CD14-positive monocyte (primary cell): ENCODE measurements at regions of chr5 and their contacts with region 1.

Region 1: DNA sequence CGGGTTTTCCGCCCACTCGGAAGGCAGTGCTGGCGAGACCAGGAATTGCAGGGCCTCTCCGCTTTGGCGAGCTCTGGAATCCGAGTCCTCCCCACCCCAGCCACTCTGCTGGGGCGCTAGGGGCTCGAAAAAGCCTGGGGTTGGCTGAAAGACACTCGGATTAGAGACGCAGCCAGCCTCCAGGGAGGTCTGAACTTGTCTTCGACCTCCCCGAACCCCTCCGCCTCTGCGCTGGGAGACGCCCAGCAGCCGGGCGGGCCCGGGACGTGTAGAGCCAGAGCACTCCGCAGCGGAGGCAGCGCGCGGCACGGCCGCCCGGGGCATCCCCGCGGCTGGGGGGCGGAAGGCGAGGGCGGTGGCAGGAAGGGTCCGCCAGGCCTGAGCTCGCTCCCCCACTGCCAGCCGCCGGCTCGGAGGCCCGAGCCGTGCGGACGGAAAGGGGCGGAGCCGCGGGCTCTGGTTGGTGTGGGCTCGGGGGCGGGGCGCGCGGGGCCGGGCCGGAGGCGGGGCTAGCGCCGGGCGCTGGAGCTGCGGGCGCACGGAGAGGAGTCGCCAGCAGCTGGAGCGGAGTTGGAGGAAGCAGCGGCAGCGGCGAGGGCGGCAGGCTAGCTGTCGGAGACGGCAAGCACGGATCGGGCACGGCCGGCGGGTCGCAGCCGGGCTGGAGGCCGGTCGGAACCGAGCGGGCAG is at the start of gene PIK3R1:
- DNase-seq: peak; percentile 92 to 93 (median 92)
- H3K4me3 ChIP-seq: peak within 1 kb of the TSS; percentile 87 to 90 (median 89)
- H3K4me3 Mint-ChIP-seq: peak within 1 kb of the TSS; percentile 88 to 94
- H3K27ac ChIP-seq: peak within 1 kb of the TSS; percentile 95 to 96
- H3K27ac Mint-ChIP-seq: peak within 1 kb of the TSS; percentile 89 to 97 (median 96)
- H3K4me1 ChIP-seq: peaks cover 24 to 32% of the 10 kb centered on the region in 2 donors
- H3K4me1 Mint-ChIP-seq: peaks cover 34% of the 10 kb centered on the region
- H3K27me3 ChIP-seq: no peaks in the 10 kb centered on the region
- H3K27me3 Mint-ChIP-seq: peaks cover 0 to 3% (median 0%) of the 10 kb centered on the region in 3 donors
- CTCF ChIP-seq: peak; percentile 23
- polyA plus RNA-seq, gene PIK3R1: 9.5 to 25.5 (median 10.5) TPM

Region 2: DNA sequence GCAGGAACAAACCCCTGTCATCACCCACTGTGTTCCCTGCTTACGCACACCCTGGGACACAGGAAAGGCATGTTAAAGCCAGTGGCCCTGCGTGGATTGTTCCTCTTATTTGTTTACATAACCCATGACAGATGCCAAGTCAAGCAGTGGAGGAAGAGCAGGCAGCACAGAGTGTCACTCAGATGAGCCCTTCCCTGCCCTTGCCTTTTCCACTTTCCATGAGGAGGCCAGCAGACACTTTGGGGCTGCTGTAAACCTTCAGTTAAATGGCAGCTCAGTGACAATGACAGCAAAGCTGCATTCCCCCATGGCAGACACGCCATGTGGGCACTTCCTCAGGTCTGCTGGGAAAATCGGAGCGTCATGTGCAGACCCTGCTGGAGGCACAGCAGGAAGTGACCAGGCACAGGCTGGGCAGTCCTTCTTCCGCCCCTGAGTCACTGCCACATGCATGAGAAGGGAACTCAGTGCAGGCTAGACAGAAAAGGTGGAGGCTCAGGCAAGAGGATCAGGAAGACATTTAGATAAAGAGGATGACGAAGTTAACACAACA is 216.6 kb before region 1 on chr5:
- intact Hi-C with region 1: loop called in 1 of 2 experiments (anchors 10 kb)
- DNase-seq: peak; percentile 90 to 99 (median 99)
- H3K4me3 ChIP-seq: peak overlapping the region in 2 of 3 experiments; percentile 12 to 29
- H3K4me3 Mint-ChIP-seq: peak overlapping the region; percentile 34 to 68
- H3K27ac ChIP-seq: peak overlapping the region; percentile 76 to 88
- H3K27ac Mint-ChIP-seq: peak overlapping the region; percentile 72 to 100 (median 95)
- H3K4me1 ChIP-seq: peaks cover 20 to 21% of the 10 kb centered on the region in 2 donors
- H3K4me1 Mint-ChIP-seq: peaks cover 18% of the 10 kb centered on the region
- H3K27me3 ChIP-seq: no peaks in the 10 kb centered on the region
- H3K27me3 Mint-ChIP-seq: peaks cover 0 to 4% (median 0%) of the 10 kb centered on the region in 3 donors
- CTCF ChIP-seq: no peak

Region 3: DNA sequence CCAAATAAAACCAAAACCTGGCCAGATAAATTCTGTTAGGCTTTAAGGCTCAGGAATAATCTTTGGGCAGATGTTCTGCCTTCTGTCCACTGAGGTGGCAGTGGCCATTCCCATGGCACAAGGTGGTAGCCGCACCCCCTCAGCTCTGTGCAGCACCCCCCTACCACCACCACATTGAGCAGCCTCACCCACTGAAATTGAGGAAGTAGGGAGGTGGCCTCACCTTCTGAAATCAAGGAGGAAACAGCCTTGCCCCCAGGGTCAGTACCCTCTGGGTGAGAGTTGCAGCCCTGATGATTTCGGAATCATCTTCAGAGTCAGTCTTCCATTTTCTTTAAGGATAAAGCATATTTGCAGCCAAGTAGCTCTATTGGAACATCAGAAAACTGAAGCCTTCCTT is 204.6 kb before region 1 on chr5:
- intact Hi-C with region 1: no loop called
- DNase-seq: no peak
- H3K4me3 ChIP-seq: no peak overlapping the region
- H3K4me3 Mint-ChIP-seq: no peak overlapping the region
- H3K27ac ChIP-seq: no peak overlapping the region
- H3K27ac Mint-ChIP-seq: no peak overlapping the region
- H3K4me1 ChIP-seq: no peaks in the 10 kb centered on the region
- H3K4me1 Mint-ChIP-seq: peaks cover 6% of the 10 kb centered on the region
- H3K27me3 ChIP-seq: no peaks in the 10 kb centered on the region
- H3K27me3 Mint-ChIP-seq: peaks cover 0 to 2% (median 1%) of the 10 kb centered on the region in 3 donors
- CTCF ChIP-seq: no peak

Region 4: GRCh38 chr5:68252673-68253623 is 37.6 kb after region 1 on chr5:
- intact Hi-C with region 1: loop called in 1 of 2 experiments (anchors 5 kb)
- DNase-seq: peak; percentile 47 to 70 (median 64)
- H3K4me3 ChIP-seq: no peak overlapping the region
- H3K4me3 Mint-ChIP-seq: no peak overlapping the region
- H3K27ac ChIP-seq: no peak overlapping the region
- H3K27ac Mint-ChIP-seq: peak overlapping the region in 1 of 7 donors; percentile 54
- H3K4me1 ChIP-seq: peaks cover 28 to 46% of the 10 kb centered on the region in 2 donors
- H3K4me1 Mint-ChIP-seq: peaks cover 67% of the 10 kb centered on the region
- H3K27me3 ChIP-seq: no peaks in the 10 kb centered on the region
- H3K27me3 Mint-ChIP-seq: no peaks in the 10 kb centered on the region
- CTCF ChIP-seq: peak; percentile 84